ENCODE measurements at regions of chr13 and their contacts with region 1.

Region 1: GRCh38 chr13:30679483-30680330 is 55.6 kb upstream of the ALOX5AP start:
- DNase-seq: peak; percentile 78
- H3K4me3 Mint-ChIP-seq: no peak overlapping the region
- H3K27ac Mint-ChIP-seq: no peak overlapping the region
- H3K4me1 Mint-ChIP-seq: peaks cover 8% of the 10 kb centered on the region
- H3K27me3 Mint-ChIP-seq: peaks cover 23% of the 10 kb centered on the region

Region 2: GRCh38 chr13:29936051-29936813 is 743.5 kb before region 1 on chr13:
- intact Hi-C with region 1: no loop called
- DNase-seq: no peak
- H3K4me3 Mint-ChIP-seq: peak overlapping the region; percentile 87
- H3K27ac Mint-ChIP-seq: peak overlapping the region; percentile 94
- H3K4me1 Mint-ChIP-seq: peaks cover 46% of the 10 kb centered on the region
- H3K27me3 Mint-ChIP-seq: peaks cover under 1% of the 10 kb centered on the region

Region 3: DNA sequence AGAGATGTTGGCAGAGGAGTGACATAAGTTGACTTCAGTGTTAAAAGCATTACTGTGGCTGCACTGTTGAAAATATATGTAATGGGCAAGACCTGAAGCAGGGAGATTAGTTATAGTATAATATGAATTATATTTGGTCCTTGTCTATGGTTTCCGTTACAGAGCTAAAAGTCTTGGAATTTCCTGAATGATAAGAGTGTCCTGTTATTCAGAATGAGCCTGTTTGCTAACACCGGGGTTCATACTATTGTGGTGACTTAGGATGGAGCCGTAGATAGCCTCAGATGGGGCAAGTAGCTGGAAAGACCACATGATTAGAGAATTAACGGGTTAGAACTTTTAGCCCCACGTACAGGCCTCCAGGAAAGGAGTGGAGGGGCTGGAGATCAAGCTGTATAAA is 56.3 kb before region 1 on chr13:
- intact Hi-C with region 1: no loop called
- DNase-seq: no peak
- H3K4me3 Mint-ChIP-seq: no peak overlapping the region
- H3K27ac Mint-ChIP-seq: peak overlapping the region; percentile 12
- H3K4me1 Mint-ChIP-seq: peaks cover 40% of the 10 kb centered on the region
- H3K27me3 Mint-ChIP-seq: no peaks in the 10 kb centered on the region

Region 4: GRCh38 chr13:30692113-30692512 is 12.4 kb after region 1 on chr13:
- intact Hi-C with region 1: loop called (anchors 2 kb)
- DNase-seq: no peak
- H3K4me3 Mint-ChIP-seq: no peak overlapping the region
- H3K27ac Mint-ChIP-seq: no peak overlapping the region
- H3K4me1 Mint-ChIP-seq: peaks cover 28% of the 10 kb centered on the region
- H3K27me3 Mint-ChIP-seq: peaks cover 33% of the 10 kb centered on the region

Region 5: DNA sequence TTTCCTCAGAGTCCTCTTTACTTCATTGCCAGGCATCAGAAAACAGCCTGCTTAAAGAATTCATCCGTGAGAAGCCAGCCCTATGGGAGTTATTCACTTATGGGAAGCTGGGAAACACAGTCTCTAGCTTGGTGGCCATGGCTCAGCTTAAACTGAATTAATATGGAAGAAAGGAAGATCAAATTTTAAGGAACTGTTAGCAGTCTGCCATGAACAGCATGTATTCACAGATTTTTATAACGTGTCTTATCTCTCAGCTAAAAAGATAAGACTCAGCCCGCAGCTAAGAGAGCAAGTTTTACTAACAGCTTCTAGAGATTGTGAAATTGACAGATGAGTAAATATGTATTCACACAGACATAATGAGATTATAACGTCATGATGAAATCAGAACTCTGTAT is 805.9 kb after region 1 on chr13:
- intact Hi-C with region 1: no loop called
- DNase-seq: no peak
- H3K4me3 Mint-ChIP-seq: no peak overlapping the region
- H3K27ac Mint-ChIP-seq: no peak overlapping the region
- H3K4me1 Mint-ChIP-seq: no peaks in the 10 kb centered on the region
- H3K27me3 Mint-ChIP-seq: no peaks in the 10 kb centered on the region

Measured in activated CD4-positive, alpha-beta T cell treated with anti-CD3 and anti-CD28 coated beads, Interleukin-2, amount 10 ng/mL, durations not matched to agents 24 days and 14 days (primary cell).